CD14-positive monocyte (primary cell): ENCODE measurements at regions of chr7 and their contacts with region 1.

Region 1: DNA sequence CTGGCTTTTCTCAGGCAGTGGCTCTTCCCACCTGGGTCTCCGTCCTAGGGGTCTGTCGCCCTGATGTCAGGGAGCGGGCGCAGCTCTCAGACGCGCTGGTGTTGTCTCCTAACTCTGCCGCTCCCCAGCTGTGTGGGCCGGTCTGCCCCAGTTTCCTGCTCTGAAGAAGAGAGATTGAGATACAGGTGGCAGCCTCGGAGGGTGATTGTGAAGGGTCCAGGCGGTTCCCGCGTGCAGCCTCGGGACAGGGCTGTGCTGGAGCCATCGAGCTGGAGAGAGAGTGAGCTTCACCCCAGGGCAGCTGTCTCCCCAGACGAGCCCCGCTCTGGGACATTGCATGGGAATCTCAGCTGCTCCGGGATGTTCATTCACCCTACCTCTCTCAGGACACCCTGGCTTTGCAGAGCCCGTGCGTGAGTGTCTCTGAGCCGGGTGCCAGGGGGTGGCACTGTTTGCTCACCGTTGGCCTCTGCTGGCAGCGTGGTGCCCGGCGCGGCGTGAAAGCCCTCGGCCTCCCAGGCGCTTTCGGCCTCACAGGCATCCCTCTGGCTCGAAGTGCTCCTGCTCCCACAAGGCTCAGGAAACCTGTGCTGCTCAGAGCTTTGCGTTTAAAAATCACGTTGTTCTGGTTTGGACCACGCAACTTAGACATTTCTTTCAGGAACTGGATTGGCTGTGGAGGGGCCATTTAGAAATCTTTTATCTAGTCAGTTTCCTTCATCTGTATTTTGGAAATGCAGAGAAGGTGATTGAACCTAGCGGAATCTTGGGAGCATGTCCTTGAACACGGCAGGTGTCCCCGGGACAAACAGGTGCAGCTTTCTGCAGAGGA is 33.8 kb upstream of the ZFAND2A start:
- DNase-seq: peak in 2 of 3 donors; percentile 12 to 35
- H3K4me3 ChIP-seq: no peak overlapping the region
- H3K4me3 Mint-ChIP-seq: no peak overlapping the region
- H3K27ac ChIP-seq: no peak overlapping the region
- H3K27ac Mint-ChIP-seq: peak overlapping the region in 1 of 7 donors; percentile 35
- H3K4me1 ChIP-seq: peaks cover 12 to 15% of the 10 kb centered on the region in 2 donors
- H3K4me1 Mint-ChIP-seq: peaks cover 22% of the 10 kb centered on the region
- H3K27me3 ChIP-seq: peaks cover 0 to 7% of the 10 kb centered on the region in 2 donors
- H3K27me3 Mint-ChIP-seq: peaks cover 10 to 27% (median 16%) of the 10 kb centered on the region in 3 donors
- CTCF ChIP-seq: peak; percentile 36

Region 2: GRCh38 chr7:1432411-1433082 is 238.7 kb after region 1 on chr7:
- intact Hi-C with region 1: loop called in 1 of 2 experiments (anchors 10 kb)
- DNase-seq: peak; percentile 42 to 64 (median 43)
- H3K4me3 ChIP-seq: no peak overlapping the region
- H3K4me3 Mint-ChIP-seq: peak overlapping the region in 1 of 2 donors; percentile 31
- H3K27ac ChIP-seq: no peak overlapping the region
- H3K27ac Mint-ChIP-seq: peak overlapping the region in 2 of 7 donors; percentile 5 to 47
- H3K4me1 ChIP-seq: no peaks in the 10 kb centered on the region
- H3K4me1 Mint-ChIP-seq: peaks cover 2% of the 10 kb centered on the region
- H3K27me3 ChIP-seq: no peaks in the 10 kb centered on the region
- H3K27me3 Mint-ChIP-seq: peaks cover 1 to 4% (median 3%) of the 10 kb centered on the region in 3 donors
- CTCF ChIP-seq: peak; percentile 99